Panc1 (cell line): ENCODE measurements at regions of chr7 and their contacts with region 1.

Region 1: GRCh38 chr7:7210475-7211237 is 28.3 kb downstream of the C1GALT1 start:
- DNase-seq: no peak
- ATAC-seq: no peak
- H3K4me3 ChIP-seq: no peak overlapping the region
- H3K27ac ChIP-seq: no peak overlapping the region
- H3K4me1 ChIP-seq: no peaks in the 10 kb centered on the region
- H3K27me3 ChIP-seq: no peaks in the 10 kb centered on the region
- CTCF ChIP-seq: no peak

Region 2: DNA sequence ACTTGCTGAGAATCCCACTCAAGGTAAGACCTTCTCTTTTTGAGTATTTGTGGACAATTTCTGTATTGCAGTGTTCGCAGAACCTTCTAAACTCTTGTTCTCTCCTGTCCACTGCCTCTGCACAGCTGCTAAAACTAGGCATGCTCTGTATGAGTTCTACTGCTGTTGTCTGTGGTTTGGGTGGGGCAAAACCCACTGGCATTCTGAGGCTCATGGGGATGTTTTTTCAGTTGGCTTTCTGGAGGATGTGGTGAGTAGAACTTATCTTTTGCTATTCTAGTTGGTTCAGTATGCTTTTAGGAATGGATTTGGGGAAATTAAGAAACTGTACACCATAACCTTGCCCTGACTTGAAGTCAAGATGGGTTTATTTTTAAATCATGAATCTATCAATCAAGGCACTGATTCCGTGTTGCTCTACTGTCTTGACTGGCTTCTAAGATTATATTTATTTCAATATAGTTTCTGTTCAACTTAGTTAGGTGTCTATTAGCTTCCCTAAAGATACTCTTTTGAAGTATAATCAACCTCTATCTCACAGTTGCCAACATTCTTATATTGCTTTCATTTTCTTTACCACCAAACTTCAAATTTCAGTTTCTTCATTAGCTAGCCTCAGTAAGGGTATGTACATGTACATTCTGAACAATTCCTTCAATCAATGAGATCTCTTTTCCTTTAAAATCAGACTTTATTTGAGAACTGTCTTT is 53.3 kb before region 1 on chr7:
- CTCF ChIA-PET with region 1: no interaction called
- POLR2A ChIA-PET with region 1: no interaction called
- in situ Hi-C with region 1: no loop called
- intact Hi-C with region 1: no loop called
- DNase-seq: no peak
- ATAC-seq: no peak
- H3K4me3 ChIP-seq: no peak overlapping the region
- H3K27ac ChIP-seq: no peak overlapping the region
- H3K4me1 ChIP-seq: no peaks in the 10 kb centered on the region
- H3K27me3 ChIP-seq: peaks cover 3% of the 10 kb centered on the region; the same call in 1 of the 2 replicates
- CTCF ChIP-seq: no peak

Region 3: DNA sequence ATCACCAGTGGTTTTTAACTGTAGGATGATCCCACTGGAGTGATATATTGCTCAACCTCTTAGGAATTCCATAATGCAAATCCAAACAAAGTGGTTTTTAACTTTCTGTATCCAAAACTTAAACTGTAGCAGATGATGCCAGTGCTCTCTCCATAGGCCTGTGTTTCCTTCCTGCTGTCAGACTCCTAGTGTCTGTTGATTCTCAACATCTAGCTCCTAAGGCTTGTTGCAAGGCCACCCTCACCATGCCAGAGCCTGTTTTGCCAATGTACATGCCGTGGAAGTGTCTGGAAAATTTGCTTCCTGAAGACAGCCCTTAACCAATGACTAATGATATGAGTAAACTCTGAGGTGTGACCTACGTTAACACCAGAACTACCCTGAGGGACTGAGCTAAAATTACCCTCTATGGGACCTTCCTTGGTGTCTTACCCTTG is 11.0 kb after region 1 on chr7:
- CTCF ChIA-PET with region 1: no interaction called
- POLR2A ChIA-PET with region 1: interaction called, 12 read pairs
- in situ Hi-C with region 1: no loop called
- intact Hi-C with region 1: no loop called
- DNase-seq: peak; percentile 72
- ATAC-seq: peak; percentile 94
- H3K4me3 ChIP-seq: no peak overlapping the region
- H3K27ac ChIP-seq: no peak overlapping the region
- H3K4me1 ChIP-seq: peaks cover 4% of the 10 kb centered on the region; the same call in 1 of the 2 replicates
- H3K27me3 ChIP-seq: no peaks in the 10 kb centered on the region
- CTCF ChIP-seq: no peak

Region 4: GRCh38 chr7:7251742-7252141 is 41.1 kb after region 1 on chr7:
- CTCF ChIA-PET with region 1: no interaction called
- POLR2A ChIA-PET with region 1: no interaction called
- in situ Hi-C with region 1: no loop called
- intact Hi-C with region 1: no loop called
- DNase-seq: no peak
- ATAC-seq: no peak
- H3K4me3 ChIP-seq: no peak overlapping the region
- H3K27ac ChIP-seq: no peak overlapping the region
- H3K4me1 ChIP-seq: no peaks in the 10 kb centered on the region
- H3K27me3 ChIP-seq: no peaks in the 10 kb centered on the region
- CTCF ChIP-seq: no peak

Region 5: DNA sequence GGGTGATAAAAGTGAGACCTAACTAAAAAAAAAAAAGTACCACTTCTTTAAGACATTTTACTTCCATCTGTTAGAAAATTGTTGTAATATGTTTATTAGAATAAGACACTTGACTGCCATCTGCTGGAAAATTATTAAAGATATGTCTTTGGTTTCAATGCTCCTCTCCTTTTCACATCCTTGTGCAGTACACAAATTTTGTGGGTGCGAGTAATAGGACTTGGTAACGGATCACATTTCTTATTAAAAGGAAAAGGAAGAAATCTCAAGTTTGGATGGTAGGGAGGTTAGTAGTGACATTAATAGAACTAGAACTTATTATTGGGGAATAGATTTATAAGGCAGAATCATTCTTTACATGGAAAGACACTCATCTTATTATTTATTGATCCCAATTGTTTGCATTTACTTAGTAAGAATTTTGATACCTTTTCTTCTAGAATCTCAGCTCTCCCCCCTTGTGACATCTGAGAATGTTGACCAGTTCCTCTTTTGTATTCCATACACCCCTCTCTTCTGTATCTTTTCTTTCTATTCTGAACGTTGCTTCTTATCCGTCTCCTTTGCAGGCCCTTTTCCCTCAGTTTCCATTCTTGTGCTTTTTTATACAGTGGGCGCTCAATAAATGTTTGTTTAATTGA is 550.8 kb after region 1 on chr7:
- CTCF ChIA-PET with region 1: no interaction called
- POLR2A ChIA-PET with region 1: no interaction called
- in situ Hi-C with region 1: no loop called
- intact Hi-C with region 1: no loop called
- DNase-seq: peak; percentile 58
- ATAC-seq: peak; percentile 73
- H3K4me3 ChIP-seq: peak overlapping the region in 1 of 2 experiments; percentile 59; a peak in 2 of 4 replicates
- H3K27ac ChIP-seq: no peak overlapping the region
- H3K4me1 ChIP-seq: peaks cover 8% of the 10 kb centered on the region; the same call in 1 of the 2 replicates
- H3K27me3 ChIP-seq: no peaks in the 10 kb centered on the region
- CTCF ChIP-seq: peak; percentile 59; the same call in 1 of the 2 replicates